WTC11 (cell line): ENCODE measurements at regions of chr1 and their contacts with region 1.

Region 1: DNA sequence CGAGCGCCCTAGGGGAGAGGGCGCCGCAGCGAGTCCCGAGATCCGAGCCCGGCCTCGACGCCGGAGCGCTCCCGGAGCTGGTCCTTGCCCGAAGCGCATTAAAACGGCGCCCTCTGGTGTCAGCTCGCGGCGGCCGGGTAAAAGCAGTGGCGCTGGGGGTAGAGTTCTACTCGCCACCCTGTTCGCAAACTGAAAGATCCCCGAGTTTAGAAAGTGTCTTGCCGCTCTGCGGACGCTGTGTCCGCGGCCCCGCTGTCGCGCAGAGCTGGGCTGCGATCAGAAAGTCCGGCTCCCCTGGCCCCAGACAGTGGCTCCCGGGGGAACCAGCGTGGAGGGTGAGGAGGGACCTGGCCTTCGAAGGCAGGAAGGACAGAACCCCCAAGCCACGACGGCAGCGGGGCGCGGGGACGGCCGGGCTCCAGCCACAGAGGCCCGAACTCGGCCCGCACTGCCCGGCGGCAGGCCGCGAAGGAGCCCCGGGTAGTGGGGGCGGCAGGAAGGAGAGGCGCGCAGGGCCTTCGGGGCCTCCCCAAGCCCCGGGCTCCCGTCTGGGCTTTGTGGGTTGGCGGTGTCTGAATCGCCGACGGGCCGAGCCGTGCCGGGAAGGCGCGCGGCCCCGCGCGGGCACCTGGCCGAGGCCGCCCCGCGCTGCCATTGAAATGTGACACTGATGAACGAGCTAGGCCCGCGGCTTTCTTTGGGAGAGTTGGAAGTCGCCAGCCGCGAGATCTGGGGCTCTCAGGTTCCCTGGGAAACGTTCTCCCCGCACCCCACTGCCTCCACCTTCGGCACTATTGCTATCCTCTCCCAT is 39.1 kb upstream of the NFIA start:
- DNase-seq: peak; percentile 96
- ATAC-seq: peak; percentile 91
- H3K4me3 Mint-ChIP-seq: peak overlapping the region; percentile 78
- H3K27ac Mint-ChIP-seq: no peak overlapping the region
- H3K4me1 Mint-ChIP-seq: peaks cover 12% of the 10 kb centered on the region
- H3K27me3 Mint-ChIP-seq: peaks cover 35% of the 10 kb centered on the region
- CTCF ChIP-seq: peak; percentile 75

Region 2: DNA sequence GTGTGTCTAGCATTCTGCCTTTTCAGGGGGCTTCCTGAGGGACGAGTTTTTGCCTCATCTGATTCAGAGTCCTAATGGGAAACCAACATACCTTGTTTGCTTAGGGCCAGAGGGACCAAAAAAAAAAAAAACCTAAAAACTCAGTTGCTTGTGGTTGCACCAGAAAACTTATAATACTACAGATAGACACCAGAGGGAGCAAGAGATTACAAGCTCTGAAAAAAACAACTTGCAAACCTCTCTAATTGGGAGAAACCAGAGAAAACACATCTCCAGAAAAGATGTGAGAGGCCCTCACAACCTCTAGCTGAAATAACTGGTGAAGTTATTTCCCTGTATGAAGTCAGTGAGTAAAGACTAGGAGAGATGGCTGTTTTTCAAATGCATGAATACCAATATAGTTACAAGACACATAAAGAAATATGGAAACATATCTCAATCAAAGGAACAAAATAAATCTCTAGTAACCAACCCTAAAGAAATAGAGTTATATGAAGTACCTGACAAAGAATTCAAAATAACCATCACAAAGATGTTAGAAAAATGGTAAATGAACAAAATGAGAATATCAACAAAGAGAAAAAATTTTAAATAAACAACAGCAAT is 194.5 kb before region 1 on chr1:
- CTCF ChIA-PET with region 1: interaction called, 49 read pairs
- POLR2A ChIA-PET with region 1: interaction called, 8 read pairs
- DNase-seq: no peak
- ATAC-seq: peak; percentile 78
- H3K4me3 Mint-ChIP-seq: no peak overlapping the region
- H3K27ac Mint-ChIP-seq: peak overlapping the region; percentile 30
- H3K4me1 Mint-ChIP-seq: peaks cover 23% of the 10 kb centered on the region
- H3K27me3 Mint-ChIP-seq: no peaks in the 10 kb centered on the region
- CTCF ChIP-seq: peak; percentile 61

Region 3: DNA sequence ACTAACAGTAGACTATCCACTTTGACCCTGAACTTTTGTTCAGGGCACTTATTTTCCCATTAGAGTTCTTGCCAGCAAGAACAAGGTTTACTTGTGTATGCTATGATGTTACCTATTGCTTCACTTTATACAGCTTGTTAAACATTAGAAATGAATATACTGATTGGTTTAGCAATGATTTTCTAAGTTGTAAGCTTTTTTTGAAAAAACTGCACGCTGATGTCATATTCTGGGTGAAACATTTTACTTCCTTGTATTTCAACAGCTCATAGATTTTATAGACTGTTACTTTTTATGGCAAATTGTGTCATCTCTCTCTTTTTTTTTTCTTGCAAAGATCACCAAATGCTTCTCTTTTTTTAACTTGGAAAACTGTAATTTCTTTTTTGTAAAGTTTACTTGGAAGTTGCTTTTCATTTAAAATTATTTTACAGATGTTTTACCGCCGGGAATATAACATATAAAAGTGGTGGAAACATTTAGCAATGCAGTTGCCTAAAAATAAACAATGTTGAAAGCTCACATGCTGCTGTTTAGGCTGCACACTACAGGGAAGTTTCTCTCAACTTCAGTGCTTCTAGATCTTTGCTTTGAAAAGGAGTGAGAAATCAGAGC is 176.2 kb before region 1 on chr1:
- CTCF ChIA-PET with region 1: no interaction called
- POLR2A ChIA-PET with region 1: no interaction called
- DNase-seq: no peak
- ATAC-seq: no peak
- H3K4me3 Mint-ChIP-seq: no peak overlapping the region
- H3K27ac Mint-ChIP-seq: no peak overlapping the region
- H3K4me1 Mint-ChIP-seq: peaks cover 35% of the 10 kb centered on the region
- H3K27me3 Mint-ChIP-seq: no peaks in the 10 kb centered on the region
- CTCF ChIP-seq: no peak

Region 4: GRCh38 chr1:60978421-60979357 is 64.5 kb before region 1 on chr1:
- CTCF ChIA-PET with region 1: interaction called, 15 read pairs
- POLR2A ChIA-PET with region 1: no interaction called
- DNase-seq: peak; percentile 20
- ATAC-seq: peak; percentile 72; the same call in 1 of the 2 replicates
- H3K4me3 Mint-ChIP-seq: no peak overlapping the region
- H3K27ac Mint-ChIP-seq: no peak overlapping the region
- H3K4me1 Mint-ChIP-seq: peaks cover 25% of the 10 kb centered on the region
- H3K27me3 Mint-ChIP-seq: no peaks in the 10 kb centered on the region; the same call in 1 of the 2 replicates
- CTCF ChIP-seq: no peak

Region 5: DNA sequence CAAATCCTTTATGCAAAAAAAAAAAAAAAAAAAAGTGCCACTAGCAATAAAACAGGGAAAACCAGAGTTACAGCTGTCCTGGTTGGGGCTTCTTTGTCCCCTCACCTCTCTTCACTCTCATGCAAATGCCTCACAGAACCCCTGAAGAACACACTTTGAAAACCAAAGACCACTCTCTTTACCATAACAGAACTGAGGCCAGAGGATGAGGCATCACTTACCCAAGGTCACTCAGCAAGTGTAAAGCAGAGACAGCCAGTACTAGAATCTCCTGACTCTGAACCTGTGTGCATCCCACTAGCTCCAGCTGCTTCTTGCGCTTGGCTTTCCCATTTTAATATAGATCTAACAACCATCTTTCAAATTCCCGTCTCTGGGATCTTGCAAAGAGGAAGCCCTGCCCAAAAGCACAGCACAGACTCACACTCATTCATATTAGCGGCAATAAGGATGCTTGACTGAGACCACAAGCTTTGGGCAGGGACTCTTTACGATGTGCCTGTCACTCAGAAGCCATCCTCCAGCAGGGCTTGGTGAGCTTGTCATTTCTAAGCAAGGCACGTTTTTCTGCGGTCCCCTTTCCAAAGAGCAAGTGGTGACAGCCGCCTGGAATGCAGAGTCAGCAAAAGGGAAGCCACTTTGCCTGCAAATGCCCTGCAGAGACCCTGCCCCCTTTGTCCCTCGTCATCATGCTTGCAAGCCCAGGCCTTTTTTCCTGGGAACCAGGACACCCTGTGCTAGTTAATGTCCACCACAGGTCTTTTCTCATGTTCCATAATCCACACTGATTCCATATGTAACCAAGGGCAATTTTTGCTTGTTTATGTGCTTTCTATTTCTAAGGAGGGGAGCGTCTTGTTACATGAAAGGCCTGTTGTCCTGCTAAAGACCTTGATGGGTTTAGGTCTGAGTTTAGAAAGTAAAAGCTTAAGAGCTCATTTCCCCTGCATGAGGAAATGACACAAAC is 37.3 kb before region 1 on chr1:
- CTCF ChIA-PET with region 1: interaction called, 15 read pairs
- POLR2A ChIA-PET with region 1: no interaction called
- DNase-seq: peak; percentile 64
- ATAC-seq: peak; percentile 93
- H3K4me3 Mint-ChIP-seq: peak overlapping the region; percentile 51
- H3K27ac Mint-ChIP-seq: peak overlapping the region; percentile 97
- H3K4me1 Mint-ChIP-seq: peaks cover 58% of the 10 kb centered on the region
- H3K27me3 Mint-ChIP-seq: no peaks in the 10 kb centered on the region; the same call in 1 of the 2 replicates
- CTCF ChIP-seq: no peak